ENCODE measurements at regions of chr12 and their contacts with region 1.

Region 1: DNA sequence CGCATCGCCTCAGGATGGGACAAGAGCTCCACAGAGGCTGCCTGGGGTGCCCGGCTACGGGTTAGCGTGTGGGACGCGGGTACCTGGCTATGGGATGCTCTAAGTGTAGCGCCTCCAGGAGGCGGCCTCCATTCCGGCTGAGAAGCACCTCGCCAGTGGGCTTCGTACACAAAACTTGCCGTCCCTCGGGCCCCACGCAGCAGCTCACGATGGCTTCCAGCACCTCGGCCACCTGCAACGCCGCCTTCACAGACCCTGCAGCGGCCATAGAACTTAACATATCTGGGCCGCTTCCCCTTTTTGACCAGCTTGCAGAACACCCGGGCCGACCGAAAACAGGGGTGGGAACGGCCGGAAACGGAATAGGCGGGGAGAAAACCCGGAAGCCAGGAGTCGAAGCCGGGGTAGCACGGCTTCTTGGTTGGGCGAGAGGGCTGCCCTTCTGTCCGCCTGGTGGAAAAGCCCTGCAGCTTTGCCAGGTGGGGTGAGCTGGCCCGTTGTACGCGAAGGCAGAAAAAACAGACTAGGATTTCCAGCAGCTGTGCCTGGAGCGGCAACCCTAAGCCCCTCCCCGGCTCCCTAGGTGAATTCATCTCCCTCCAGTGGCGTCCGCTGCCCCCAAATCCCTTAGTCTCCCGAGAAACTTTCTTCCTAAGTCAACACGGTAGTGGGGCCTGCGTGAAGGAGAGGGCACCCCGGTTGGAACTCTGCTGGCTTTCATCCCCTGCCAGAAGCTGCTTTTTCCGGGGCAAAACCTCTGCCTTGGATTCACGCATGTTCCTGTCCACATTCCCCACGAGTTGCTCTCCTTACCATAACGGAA is at the start of gene BBS10:
- DNase-seq: peak; percentile 80 to 96 (median 92)
- H3K4me3 ChIP-seq: peak within 1 kb of the TSS; percentile 52 to 95 (median 82)
- H3K27ac ChIP-seq: peak within 1 kb of the TSS; percentile 76 to 97 (median 89)
- H3K27me3 ChIP-seq: no peaks in the 10 kb centered on the region
- CTCF ChIP-seq: peak in 55 of 56 donors; percentile 27 to 73 (median 57)
- total RNA-seq, gene BBS10: 9.8 to 20.9 (median 14.8) TPM

Region 2: GRCh38 chr12:75511116-75512048 is 836.9 kb before region 1 on chr12 and contains the start of gene KRR1:
- intact Hi-C with region 1: loop called in 1 of 2 experiments (anchors 1 kb)
- DNase-seq: peak; percentile 88 to 98 (median 95)
- H3K4me3 ChIP-seq: peak within 1 kb of the TSS; percentile 65 to 100 (median 89)
- H3K27ac ChIP-seq: peak within 1 kb of the TSS in 54 of 59 donors; percentile 14 to 86 (median 76)
- H3K27me3 ChIP-seq: no peaks in the 10 kb centered on the region
- CTCF ChIP-seq: peak in 44 of 56 donors; percentile 6 to 68 (median 36)
- total RNA-seq, gene KRR1: 35.1 to 68.2 (median 51.2) TPM

Region 3: DNA sequence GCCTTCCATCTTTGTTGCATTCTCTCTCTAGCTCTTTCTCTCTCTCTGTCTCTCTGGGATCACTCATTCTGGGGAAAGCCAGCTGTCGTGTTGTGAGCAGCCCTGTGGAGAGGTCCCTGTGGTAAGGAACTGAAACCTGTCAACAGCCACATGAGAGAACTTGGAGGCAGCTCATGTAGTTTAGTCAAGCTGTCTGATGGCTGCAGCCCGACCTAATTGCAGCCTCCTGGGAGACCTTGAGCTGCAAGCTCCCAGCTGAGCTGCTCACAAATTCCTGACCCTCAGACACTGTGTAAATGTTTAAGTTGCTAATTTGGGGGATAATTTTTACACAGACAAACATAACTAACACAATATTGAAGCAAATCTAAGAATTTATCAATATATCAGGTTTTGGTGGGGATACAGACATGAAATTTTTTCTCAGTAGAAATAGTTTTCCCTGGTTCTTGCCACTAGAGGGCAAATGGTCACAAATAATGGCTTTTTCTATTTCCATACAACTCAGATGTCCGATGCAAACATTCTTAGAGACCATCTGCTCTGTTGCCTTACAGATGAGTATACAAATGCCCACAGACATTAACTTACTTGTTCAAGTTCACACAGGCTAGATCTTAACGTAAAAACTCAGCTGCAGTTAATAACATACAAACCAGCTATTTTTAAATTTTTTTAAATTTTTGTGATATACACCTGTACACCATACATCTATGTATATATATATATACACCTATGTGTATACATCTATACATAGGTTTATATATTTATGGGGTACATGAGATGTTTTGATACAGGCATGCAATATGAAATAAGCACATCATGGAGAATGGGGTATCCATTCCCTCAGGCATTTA is 821.4 kb before region 1 on chr12:
- intact Hi-C with region 1: loop called in 1 of 2 experiments (anchors 10 kb)
- DNase-seq: peak in 1 of 10 donors; percentile 4
- H3K4me3 ChIP-seq: no peak overlapping the region
- H3K27ac ChIP-seq: no peak overlapping the region
- H3K27me3 ChIP-seq: no peaks in the 10 kb centered on the region
- CTCF ChIP-seq: peak; percentile 57 to 90 (median 77)

Region 4: DNA sequence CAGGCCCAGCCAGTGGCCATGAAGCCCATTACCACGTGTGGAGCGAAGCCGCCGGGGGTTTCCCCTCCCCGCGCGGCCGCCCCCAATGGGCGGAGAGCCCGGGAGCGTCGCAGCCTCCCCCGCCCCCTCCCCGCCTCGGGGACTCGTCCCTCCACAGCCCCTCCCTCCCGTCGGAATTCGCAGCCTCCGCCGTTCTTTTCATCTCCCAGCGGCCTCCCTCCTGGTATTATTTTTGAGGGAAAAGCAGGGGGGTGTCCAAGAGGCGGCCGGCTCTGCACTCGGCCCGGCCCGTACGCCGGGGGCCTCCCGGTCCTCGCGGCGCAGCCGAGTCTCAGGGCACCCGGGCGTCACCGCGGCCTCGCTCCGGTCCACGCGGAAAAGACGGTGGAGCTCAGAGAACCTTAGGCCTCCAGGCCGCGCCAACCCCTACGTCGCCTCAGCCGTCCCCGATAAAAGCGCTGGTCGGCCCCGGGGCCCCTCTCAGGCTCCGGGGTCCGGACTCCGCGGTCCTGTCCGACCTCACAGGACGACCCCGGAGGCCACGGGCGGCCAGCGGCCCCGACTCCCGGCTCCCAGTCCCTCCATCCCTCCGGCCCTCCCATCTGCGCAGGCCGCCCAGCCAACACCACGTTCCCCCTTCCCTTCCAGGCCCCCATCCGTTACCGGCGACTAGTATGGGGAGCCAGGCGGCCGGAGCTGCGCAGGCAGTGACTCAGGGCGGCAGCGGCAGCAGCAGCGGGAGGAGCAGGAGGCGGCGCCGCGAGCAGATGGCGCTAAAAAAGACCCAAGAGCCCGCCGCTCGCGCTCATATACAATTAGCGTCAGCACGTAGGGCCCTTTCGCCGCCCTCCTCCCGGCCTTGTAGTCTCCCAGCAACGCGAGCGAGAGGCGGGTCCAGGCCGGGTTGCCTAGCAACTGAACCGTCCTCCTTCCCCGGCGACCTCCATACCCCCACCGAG is 264.1 kb before region 1 on chr12 and contains the start of gene NAP1L1:
- intact Hi-C with region 1: loop called (anchors 2 kb)
- DNase-seq: peak; percentile 97 to 99 (median 98)
- H3K4me3 ChIP-seq: peak within 1 kb of the TSS; percentile 57 to 99 (median 90)
- H3K27ac ChIP-seq: peak within 1 kb of the TSS; percentile 73 to 99 (median 97)
- H3K27me3 ChIP-seq: no peaks in the 10 kb centered on the region
- CTCF ChIP-seq: peak in 14 of 56 donors; percentile 4 to 32 (median 11)
- total RNA-seq, gene NAP1L1: 291 to 450 (median 373) TPM

Region 5: GRCh38 chr12:76158518-76159321 is 189.6 kb before region 1 on chr12:
- intact Hi-C with region 1: loop called in 1 of 2 experiments (anchors 10 kb)
- DNase-seq: peak in 6 of 10 donors; percentile 18 to 54 (median 49)
- H3K4me3 ChIP-seq: peak overlapping the region in 42 of 59 donors; percentile 2 to 47 (median 24)
- H3K27ac ChIP-seq: peak overlapping the region in 46 of 59 donors; percentile 2 to 81 (median 45)
- H3K27me3 ChIP-seq: no peaks in the 10 kb centered on the region
- CTCF ChIP-seq: peak in 55 of 56 donors; percentile 26 to 75 (median 60)

Region 6: GRCh38 chr12:76277480-76277879 is 70.8 kb before region 1 on chr12:
- intact Hi-C with region 1: loop called in 1 of 2 experiments (anchors 10 kb)
- DNase-seq: no peak
- H3K4me3 ChIP-seq: no peak overlapping the region
- H3K27ac ChIP-seq: no peak overlapping the region
- H3K27me3 ChIP-seq: no peaks in the 10 kb centered on the region
- CTCF ChIP-seq: no peak

Region 7: GRCh38 chr12:76559400-76560085 is 211.3 kb after region 1 on chr12 and contains the start of gene OSBPL8:
- intact Hi-C with region 1: loop called (anchors 2 to 10 kb)
- DNase-seq: peak; percentile 92 to 98 (median 96)
- H3K4me3 ChIP-seq: peak within 1 kb of the TSS; percentile 68 to 99 (median 92)
- H3K27ac ChIP-seq: peak within 1 kb of the TSS; percentile 78 to 99 (median 95)
- H3K27me3 ChIP-seq: no peaks in the 10 kb centered on the region
- CTCF ChIP-seq: peak in 50 of 56 donors; percentile 8 to 67 (median 50)
- total RNA-seq, gene OSBPL8: 57.8 to 129 (median 93.5) TPM